Left lung (tissue), 14 donors: ENCODE measurements at regions of chr14 and their contacts with region 1.

Region 1: DNA sequence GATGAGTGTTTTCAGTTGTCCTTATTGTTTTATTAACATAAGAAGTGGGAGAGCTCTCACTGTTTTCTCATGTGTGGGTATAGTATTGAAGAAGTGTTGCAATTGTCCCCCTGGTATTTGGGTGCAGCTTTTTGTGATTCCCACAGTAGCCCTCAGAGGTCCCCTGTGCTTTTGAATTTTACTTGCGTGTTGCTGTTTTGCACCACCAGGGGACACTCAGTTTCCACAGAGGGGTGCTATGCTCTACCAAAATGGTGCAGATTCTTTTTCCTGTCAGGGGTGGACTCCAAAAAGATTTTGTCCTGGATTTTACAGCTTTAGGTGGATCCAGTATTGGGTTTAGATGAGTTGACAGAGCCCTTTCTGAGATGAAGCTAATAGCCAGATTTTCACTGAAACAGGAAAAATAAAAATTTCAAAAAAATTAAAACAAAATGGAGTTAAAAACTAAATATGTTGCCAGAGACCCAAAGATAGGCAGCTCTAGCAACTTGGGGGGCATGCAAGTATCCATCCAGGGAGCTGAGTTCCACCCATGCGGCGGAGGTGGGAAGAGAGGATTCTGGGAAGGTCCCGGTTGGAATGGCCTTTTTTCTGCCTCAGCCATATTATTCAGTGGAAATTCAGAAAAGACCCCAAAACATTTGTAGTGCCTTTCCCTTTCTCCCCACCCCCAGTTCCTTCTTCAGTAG is 50.2 kb downstream of the TTLL5 start:
- DNase-seq: peak in 2 of 4 donors; percentile 51 to 75
- ATAC-seq: peak; percentile 79
- H3K4me3 ChIP-seq: no peak overlapping the region
- H3K27ac ChIP-seq: peak overlapping the region; percentile 62 to 78
- H3K4me1 ChIP-seq: peaks cover 15 to 19% of the 10 kb centered on the region in 2 donors
- H3K27me3 ChIP-seq: no peaks in the 10 kb centered on the region
- CTCF ChIP-seq: peak; percentile 17 to 61

Region 2: DNA sequence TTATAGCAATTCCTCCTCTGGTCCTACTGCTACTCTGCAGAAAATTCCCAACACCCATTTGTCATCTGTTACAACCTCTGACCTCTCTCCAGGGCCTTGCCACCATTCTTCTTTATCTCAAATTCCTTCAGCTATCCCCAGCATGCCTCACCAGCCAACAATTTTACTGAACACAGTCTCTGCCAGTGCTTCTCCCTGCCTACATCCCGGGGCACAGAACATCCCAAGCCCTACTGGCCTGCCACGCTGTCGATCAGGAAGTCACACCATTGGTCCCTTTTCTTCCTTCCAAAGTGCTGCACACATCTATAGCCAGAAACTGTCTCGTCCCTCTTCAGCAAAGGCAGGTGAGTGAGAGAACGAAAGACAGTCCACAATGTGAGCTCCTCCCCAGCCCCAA is 71.9 kb after region 1 on chr14:
- intact Hi-C with region 1: loop called in 1 of 2 experiments (anchors 10 kb)
- DNase-seq: no peak
- ATAC-seq: no peak
- H3K4me3 ChIP-seq: no peak overlapping the region
- H3K27ac ChIP-seq: no peak overlapping the region
- H3K4me1 ChIP-seq: no peaks in the 10 kb centered on the region
- H3K27me3 ChIP-seq: no peaks in the 10 kb centered on the region
- CTCF ChIP-seq: no peak

Region 3: DNA sequence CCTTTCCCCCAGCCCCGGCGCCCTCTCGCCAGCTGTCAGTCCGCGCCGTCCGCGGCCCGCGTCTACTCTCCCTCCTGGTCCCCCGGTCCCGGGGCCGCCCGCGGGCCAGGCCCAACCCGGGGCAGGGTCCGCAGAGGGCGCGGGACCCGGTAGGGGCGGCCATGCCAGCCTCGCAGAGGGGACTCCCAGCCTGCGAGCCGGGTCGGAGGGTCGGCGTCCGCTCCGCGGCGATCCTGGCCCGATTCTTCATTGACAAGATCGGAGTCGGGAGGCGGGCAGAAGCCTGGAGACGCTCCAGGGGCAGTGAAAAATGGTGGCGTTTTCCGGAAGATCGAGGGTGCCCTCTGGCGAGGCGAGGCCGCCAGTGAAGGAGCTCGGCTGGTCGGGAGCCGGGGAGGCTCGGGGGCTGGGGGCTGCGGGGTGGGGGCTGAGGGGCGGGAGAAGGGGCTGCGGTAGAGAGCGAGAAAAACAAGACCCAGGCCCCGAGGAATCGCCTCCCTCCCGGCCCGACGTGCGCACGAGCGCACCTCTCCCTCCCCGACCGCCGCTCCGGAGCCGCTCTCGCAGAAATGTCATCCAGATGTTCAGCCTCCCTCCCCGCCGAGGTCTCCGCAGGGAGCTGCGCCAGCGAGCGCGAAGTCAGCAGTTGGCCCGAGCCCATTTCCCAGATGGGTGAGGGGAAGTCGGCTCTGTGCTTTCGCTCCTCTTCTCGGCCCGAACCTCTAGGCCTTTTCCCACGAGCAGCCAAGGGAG is 271.2 kb after region 1 on chr14:
- intact Hi-C with region 1: loop called in 1 of 2 experiments (anchors 5 kb)
- DNase-seq: peak; percentile 86 to 92 (median 92)
- ATAC-seq: peak; percentile 77
- H3K4me3 ChIP-seq: peak overlapping the region; percentile 52 to 65
- H3K27ac ChIP-seq: peak overlapping the region; percentile 85 to 94
- H3K4me1 ChIP-seq: peaks cover 14 to 55% of the 10 kb centered on the region in 2 donors
- H3K27me3 ChIP-seq: no peaks in the 10 kb centered on the region
- CTCF ChIP-seq: peak; percentile 56